ENCODE measurements at regions of chr6 and their contacts with region 1.

Region 1: GRCh38 chr6:25992413-25993037 is 29.9 kb downstream of the TRIM38 start:
- DNase-seq: peak; percentile 95
- H3K4me3 ChIP-seq: peak overlapping the region; percentile 70
- H3K27ac ChIP-seq: peak overlapping the region; percentile 63
- H3K4me1 ChIP-seq: peaks cover 46% of the 10 kb centered on the region
- CTCF ChIP-seq: peak; percentile 97

Region 2: GRCh38 chr6:25717866-25718740 is 274.4 kb before region 1 on chr6:
- CTCF ChIA-PET with region 1: no interaction called
- POLR2A ChIA-PET with region 1: interaction called, 3 read pairs
- intact Hi-C with region 1: loop called (anchors 5 kb)
- DNase-seq: peak; percentile 59
- H3K4me3 ChIP-seq: no peak overlapping the region
- H3K27ac ChIP-seq: no peak overlapping the region
- H3K4me1 ChIP-seq: no peaks in the 10 kb centered on the region
- CTCF ChIP-seq: peak; percentile 91

Region 3: GRCh38 chr6:25962149-25963127 is 30.1 kb before region 1 on chr6 and contains the start of gene TRIM38:
- CTCF ChIA-PET with region 1: interaction called, 3 read pairs
- POLR2A ChIA-PET with region 1: interaction called, 25 read pairs
- intact Hi-C with region 1: loop called (anchors 1 kb)
- DNase-seq: peak; percentile 94
- H3K4me3 ChIP-seq: peak within 1 kb of the TSS; percentile 96
- H3K27ac ChIP-seq: peak within 1 kb of the TSS; percentile 94
- H3K4me1 ChIP-seq: peaks cover 56% of the 10 kb centered on the region
- CTCF ChIP-seq: no peak; the same call in 1 of the 2 replicates
- total RNA-seq, gene TRIM38: 11.9 and 12.8 TPM in 2 replicates

Region 4: DNA sequence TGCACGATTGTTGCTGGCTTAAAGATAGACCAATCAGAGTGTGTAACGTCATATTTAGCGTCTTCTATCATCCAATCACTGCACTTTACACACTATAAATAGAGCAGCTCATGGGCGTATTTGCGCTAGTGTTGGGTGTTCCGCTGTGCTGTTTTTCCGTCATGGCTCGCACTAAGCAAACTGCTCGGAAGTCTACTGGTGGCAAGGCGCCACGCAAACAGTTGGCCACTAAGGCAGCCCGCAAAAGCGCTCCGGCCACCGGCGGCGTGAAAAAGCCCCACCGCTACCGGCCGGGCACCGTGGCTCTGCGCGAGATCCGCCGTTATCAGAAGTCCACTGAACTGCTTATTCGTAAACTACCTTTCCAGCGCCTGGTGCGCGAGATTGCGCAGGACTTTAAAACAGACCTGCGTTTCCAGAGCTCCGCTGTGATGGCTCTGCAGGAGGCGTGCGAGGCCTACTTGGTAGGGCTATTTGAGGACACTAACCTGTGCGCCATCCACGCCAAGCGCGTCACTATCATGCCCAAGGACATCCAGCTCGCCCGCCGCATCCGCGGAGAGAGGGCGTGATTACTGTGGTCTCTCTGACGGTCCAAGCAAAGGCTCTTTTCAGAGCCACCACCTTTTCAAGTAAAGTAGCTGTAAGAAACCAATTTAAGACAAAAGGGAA is 27.9 kb after region 1 on chr6:
- CTCF ChIA-PET with region 1: interaction called, 3 read pairs
- POLR2A ChIA-PET with region 1: interaction called, 50 read pairs
- intact Hi-C with region 1: loop called (anchors 1 kb)
- DNase-seq: peak; percentile 93
- H3K4me3 ChIP-seq: peak overlapping the region; percentile 75
- H3K27ac ChIP-seq: peak overlapping the region; percentile 99
- H3K4me1 ChIP-seq: peaks cover 56% of the 10 kb centered on the region
- CTCF ChIP-seq: no peak